ENCODE measurements at regions of chr9 and their contacts with region 1.

Region 1: DNA sequence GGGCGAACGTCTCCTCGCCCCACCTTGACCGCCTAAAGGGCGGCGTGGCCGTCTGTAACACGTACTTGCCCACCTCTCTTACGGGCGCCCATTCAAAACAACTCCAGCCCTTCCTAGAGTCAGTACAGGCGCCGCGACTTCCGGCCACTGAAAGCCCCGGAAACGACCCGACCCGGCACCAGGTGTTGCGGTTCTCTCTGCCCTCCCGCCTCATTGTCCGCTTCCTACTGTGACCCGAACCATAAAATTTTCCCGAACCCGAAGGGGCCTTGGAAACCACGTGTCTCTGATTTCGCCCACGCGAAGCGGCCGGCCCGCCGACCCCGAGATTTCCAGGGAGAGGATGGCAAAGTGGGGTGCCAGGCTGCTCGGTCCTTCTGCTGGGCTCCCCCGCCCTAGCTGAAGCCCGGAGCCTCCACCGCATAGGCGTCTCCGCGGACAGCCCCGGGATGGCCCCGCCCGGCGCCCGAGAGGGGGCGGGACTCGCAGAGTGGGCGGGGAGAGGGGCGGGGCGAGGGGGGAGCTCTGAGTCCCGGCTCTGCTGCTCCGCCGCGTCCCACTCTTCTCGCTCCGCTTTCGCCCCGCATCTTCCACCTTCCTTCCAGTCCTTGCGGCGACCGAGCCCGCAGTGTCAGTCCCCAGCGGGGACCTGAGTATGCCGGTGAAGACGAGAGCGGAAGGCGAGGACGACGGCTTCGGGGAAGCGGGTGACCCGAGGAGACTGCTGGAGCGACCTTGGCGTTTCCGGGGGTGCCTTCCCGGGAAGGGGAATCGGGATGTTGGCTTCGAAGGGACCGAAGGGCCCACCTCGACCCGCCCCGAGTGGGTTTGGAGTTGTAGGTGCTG is 684 bp upstream of the PTGES2 start:
- DNase-seq: peak; percentile 84
- H3K4me3 ChIP-seq: peak overlapping the region; percentile 83 to 92 (median 90)
- H3K27ac ChIP-seq: peak overlapping the region; percentile 76
- H3K4me1 ChIP-seq: peaks cover 11% of the 10 kb centered on the region
- H3K27me3 ChIP-seq: peaks cover 8 to 9% of the 10 kb centered on the region in 2 experiments
- CTCF ChIP-seq: no peak
- POLR2A ChIP-seq: peak; percentile 32

Region 2: GRCh38 chr9:128094166-128094967 is 33.8 kb before region 1 on chr9:
- CTCF ChIA-PET with region 1: interaction called, 5 read pairs
- POLR2A ChIA-PET with region 1: interaction called, 3 read pairs
- dilution Hi-C with region 1: no loop called
- intact Hi-C with region 1: loop called (anchors 1 kb)
- DNase-seq: peak; percentile 98
- H3K4me3 ChIP-seq: peak overlapping the region in 2 of 3 experiments; percentile 22 to 54
- H3K27ac ChIP-seq: peak overlapping the region; percentile 93
- H3K4me1 ChIP-seq: peaks cover 33% of the 10 kb centered on the region
- H3K27me3 ChIP-seq: no peaks in the 10 kb centered on the region
- CTCF ChIP-seq: no peak
- POLR2A ChIP-seq: peak; percentile 67